Lower leg skin (tissue), 4 donors: ENCODE measurements at regions of chr12 and their contacts with region 1.

Region 1: GRCh38 chr12:113208041-113208934 is 13.0 kb upstream of the TPCN1 start:
- DNase-seq: peak in 1 of 2 donors; percentile 66
- H3K4me3 ChIP-seq: no peak overlapping the region
- CTCF ChIP-seq: no peak
- POLR2A ChIP-seq: no peak

Region 2: DNA sequence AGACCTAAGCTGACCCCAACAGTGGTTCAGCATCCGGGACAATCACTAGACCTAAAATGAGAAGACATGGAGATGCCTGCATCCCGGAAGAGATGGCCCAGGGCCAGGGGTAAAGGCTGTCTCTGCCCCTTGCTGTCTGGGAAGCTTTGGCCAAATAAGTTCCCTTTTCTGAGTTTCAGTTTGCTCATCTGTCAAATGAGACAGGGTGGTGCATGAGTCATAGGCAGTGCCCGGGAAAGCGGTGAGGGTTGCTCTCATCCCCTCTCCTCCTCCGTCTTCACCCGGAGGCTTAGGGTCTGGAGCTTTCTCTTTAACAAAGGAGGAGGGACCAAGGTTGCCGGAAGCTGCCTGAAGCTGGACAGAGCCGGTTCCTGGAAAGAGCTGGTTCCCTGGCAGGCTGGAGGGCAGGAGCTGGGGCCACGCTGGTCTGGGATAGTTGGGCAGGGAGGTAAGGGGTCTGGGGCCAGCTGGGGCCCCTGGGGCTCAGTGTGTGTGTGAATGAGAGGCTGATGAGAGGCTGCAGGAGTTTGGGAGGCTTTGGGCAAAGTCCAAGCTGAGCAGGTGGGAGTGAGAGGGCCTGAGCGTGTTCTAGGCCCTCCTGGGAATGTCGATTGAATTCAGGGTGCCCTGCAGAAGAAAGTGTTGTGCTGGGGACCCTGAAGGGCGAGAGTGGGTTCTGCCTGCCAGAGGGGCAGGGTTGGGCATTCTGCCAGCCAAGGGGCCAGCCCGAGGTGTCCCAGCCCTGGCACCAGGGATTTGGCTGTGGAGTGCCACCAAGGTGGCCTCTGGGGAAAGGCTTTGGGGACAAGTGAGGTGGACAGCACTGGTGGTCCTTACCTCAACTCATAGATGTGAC is 214.0 kb after region 1 on chr12 and contains the start of gene SDSL:
- intact Hi-C with region 1: loop called (anchors 10 kb)
- DNase-seq: peak; percentile 62 to 91
- H3K4me3 ChIP-seq: no peak within 1 kb of the TSS
- CTCF ChIP-seq: no peak
- POLR2A ChIP-seq: no peak
- total RNA-seq, gene SDSL: 0.46 to 1.8 (median 1.4) TPM in 3 of 4 donors, not detected in the other